ENCODE measurements at regions of chr12 and their contacts with region 1.

Region 1: DNA sequence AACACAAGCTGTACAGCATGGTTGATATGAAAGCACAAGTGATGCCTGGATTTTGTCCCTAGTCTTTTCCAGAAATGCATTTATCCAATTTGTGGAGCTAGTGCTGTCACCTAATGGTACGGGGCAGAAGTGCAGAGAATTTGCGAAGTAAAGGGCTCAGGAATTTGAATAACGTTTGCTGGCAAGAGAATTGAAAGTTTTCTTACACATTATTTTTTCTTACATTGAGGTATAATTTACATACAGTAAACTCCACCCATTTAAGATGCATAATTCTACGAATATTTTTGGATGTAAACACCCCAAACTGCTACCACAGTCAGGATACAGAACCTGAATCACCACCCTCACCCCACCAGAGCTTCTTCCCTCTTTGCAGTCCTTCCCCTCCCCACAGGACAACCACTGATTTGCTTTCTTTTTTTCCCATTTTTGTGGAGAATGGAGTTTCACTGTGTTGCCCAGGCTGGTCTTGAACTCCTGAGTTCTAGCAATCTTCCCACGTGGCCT is 3.5 kb downstream of the AICDA start:
- DNase-seq: no peak
- ATAC-seq: peak in 1 of 2 donors; percentile 50

Region 2: GRCh38 chr12:8532045-8532444 is 77.1 kb before region 1 on chr12:
- intact Hi-C with region 1: no loop called
- DNase-seq: no peak
- ATAC-seq: no peak

Region 3: GRCh38 chr12:8544295-8544694 is 64.8 kb before region 1 on chr12:
- intact Hi-C with region 1: loop called (anchors 2 to 5 kb)
- DNase-seq: peak; percentile 44
- ATAC-seq: peak; percentile 59

Region 4: GRCh38 chr12:8844665-8845064 is 235.5 kb after region 1 on chr12:
- intact Hi-C with region 1: no loop called
- DNase-seq: peak; percentile 79
- ATAC-seq: peak; percentile 79 to 91

Region 5: GRCh38 chr12:8870586-8870985 is 261.5 kb after region 1 on chr12:
- intact Hi-C with region 1: no loop called
- DNase-seq: no peak
- ATAC-seq: no peak

Region 6: GRCh38 chr12:9237286-9237685 is 628.2 kb after region 1 on chr12:
- intact Hi-C with region 1: no loop called
- DNase-seq: no peak
- ATAC-seq: no peak